ENCODE measurements at regions of chr2 and their contacts with region 1.

Region 1: DNA sequence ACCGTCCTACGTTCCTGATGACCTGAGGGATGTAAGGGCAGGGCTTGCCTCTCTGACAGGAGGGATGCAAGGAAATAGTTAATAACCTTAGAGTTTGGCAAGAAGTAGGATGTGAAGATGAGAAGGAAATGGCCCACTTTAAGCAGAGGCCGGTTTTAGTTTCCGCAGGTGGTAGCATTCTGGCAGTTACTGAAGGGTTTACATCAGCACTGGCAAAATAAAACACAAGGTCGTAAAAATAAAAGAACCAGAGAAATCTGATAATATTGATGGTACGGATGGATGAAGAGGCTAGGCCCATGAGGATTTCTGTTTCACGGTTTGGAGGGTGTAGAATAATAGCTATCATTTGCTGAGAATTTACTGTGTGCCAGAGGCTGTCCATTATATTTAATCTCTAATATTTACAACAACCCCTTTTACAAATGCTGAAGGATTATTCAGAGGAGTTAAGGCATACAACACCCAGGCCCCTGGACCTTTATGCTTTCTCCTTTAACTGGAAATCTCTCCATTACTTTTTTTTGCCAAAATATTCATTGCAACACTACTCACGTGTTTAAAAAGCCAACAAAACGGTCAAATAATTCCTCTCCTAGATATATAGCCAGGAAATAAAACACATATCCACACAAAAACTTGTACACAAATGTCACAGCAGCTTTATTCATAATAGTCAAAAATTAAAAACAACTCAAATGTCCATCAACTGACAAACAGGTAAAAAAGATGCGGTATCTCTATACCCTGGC is 28.5 kb downstream of the DAPL1 start:
- DNase-seq: no peak
- H3K4me3 ChIP-seq: no peak overlapping the region
- H3K27ac ChIP-seq: no peak overlapping the region
- H3K4me1 ChIP-seq: peaks cover 0 to under 1% (median 0%) of the 10 kb centered on the region in 4 donors
- H3K27me3 ChIP-seq: no peaks in the 10 kb centered on the region
- CTCF ChIP-seq: no peak
- EP300 ChIP-seq: no peak
- POLR2A ChIP-seq: no peak

Region 2: DNA sequence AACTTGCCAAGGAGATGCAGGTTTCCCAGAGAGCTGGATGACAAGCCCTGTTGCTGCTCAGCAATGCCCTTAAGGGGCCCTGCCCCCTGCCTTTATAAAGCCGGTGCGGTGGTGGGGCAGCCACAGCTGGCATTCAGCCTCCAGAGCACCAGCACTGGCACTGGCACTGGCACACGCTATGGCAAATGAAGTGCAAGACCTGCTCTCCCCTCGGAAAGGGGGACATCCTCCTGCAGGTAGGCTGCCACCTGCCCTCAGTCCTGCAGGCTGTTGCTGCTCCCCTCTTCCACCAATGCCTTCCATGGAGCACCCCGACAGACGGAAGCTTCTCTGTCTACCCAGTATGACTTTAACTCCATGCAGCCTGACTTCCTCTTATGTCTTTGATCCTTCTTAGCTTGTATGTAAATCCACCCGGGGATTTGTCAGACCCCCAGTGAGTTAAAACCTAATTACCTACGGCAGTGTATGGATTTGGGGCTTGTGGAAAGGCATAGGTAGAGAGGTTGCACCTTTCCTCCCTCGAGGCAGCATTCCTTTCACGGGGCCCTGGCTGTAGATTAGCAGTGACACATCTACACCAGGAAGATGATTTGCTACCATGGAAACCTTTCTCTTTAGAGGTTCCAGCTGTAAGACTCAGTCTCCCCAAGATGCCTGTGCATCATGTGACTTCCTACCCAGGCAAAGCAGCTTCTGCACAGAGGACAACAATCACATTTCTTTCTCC is 28.3 kb before region 1 on chr2 and contains the start of gene DAPL1:
- in situ Hi-C with region 1: no loop called
- intact Hi-C with region 1: loop called (anchors 1 kb)
- DNase-seq: peak; percentile 11
- H3K4me3 ChIP-seq: no peak within 1 kb of the TSS
- H3K27ac ChIP-seq: no peak within 1 kb of the TSS
- H3K4me1 ChIP-seq: no peaks in the 10 kb centered on the region
- H3K27me3 ChIP-seq: peaks cover 4% of the 10 kb centered on the region
- CTCF ChIP-seq: no peak
- EP300 ChIP-seq: no peak
- POLR2A ChIP-seq: no peak
- total RNA-seq, gene DAPL1: not detected

Region 3: GRCh38 chr2:158810731-158811460 is 12.8 kb before region 1 on chr2:
- in situ Hi-C with region 1: no loop called
- intact Hi-C with region 1: no loop called
- DNase-seq: no peak
- H3K4me3 ChIP-seq: no peak overlapping the region
- H3K27ac ChIP-seq: no peak overlapping the region
- H3K4me1 ChIP-seq: no peaks in the 10 kb centered on the region
- H3K27me3 ChIP-seq: no peaks in the 10 kb centered on the region
- CTCF ChIP-seq: no peak
- EP300 ChIP-seq: no peak
- POLR2A ChIP-seq: no peak

Region 4: DNA sequence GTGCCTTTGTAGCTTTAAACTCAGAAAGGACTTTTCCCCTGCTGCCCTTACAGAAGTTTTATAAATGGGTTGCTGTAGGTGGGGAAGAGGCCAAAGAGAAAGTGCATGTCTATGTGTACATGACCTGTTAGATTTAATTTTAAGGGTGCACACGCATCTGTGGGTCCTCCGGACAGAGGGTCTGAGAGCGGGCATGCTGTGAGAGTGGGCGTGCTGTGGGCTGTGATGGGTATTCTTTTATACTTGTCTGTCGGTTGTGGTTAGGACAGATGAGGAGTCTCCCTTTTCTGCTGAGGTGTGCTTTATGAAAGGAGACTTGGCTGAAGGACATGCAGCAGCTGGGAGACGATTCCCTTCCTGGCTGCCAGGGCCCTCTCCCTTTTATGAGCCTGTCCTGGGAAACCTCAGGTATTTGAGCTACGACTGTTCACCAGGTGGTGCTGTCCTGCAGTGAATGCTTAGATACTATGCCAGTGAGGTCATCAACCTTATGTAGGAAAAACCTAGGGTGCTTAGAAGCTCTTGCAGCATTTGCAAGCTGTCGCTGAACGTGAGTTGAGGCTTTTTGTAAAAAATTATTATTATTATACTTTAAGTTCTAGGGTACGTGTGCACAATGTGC is 212.2 kb after region 1 on chr2:
- in situ Hi-C with region 1: no loop called
- intact Hi-C with region 1: no loop called
- DNase-seq: peak; percentile 70
- H3K4me3 ChIP-seq: no peak overlapping the region
- H3K27ac ChIP-seq: peak overlapping the region; percentile 24 to 42 (median 30)
- H3K4me1 ChIP-seq: peaks cover 2 to 24% (median 12%) of the 10 kb centered on the region in 4 donors
- H3K27me3 ChIP-seq: no peaks in the 10 kb centered on the region
- CTCF ChIP-seq: peak in 4 of 5 experiments; percentile 39 to 75 (median 56)
- EP300 ChIP-seq: no peak
- POLR2A ChIP-seq: no peak

Measured in transverse colon (tissue), 4 donors.